CD4-positive, alpha-beta memory T cell (primary cell): ENCODE measurements at regions of chr5 and their contacts with region 1.

Region 1: GRCh38 chr5:50962934-50963872 is 296.8 kb downstream of the PARP8 start:
- DNase-seq: peak; percentile 41 to 56 (median 47)
- H3K4me3 ChIP-seq: peak overlapping the region; percentile 14 to 17
- H3K4me3 Mint-ChIP-seq: peak overlapping the region; percentile 78 to 96 (median 86)
- H3K27ac ChIP-seq: no peak overlapping the region
- H3K27ac Mint-ChIP-seq: no peak overlapping the region
- H3K4me1 ChIP-seq: peaks cover 49% of the 10 kb centered on the region
- H3K4me1 Mint-ChIP-seq: peaks cover 27 to 47% (median 39%) of the 10 kb centered on the region in 4 donors
- H3K27me3 ChIP-seq: peaks cover 48% of the 10 kb centered on the region
- H3K27me3 Mint-ChIP-seq: peaks cover 48 to 50% of the 10 kb centered on the region in 2 donors

Region 2: DNA sequence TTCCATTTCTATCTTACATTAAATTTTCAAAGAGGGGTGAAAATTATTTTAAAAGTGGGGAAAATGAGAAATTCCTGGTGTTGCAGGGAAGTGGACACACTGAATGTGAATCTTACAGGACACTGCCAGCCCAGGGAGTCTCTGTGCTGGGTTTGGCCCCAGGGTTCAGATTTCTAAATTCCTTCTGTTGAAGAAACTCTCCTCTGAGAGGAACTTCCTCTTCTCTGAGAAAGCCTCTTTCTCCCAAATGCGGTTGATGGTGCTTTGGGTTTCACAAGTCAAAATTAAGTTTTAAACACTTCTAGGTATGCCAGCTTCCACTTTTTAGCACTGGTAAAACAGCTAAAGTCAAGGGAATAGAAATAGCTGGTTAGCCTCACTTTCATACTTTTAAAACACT is 1506.6 kb after region 1 on chr5:
- CTCF ChIA-PET with region 1: no interaction called
- POLR2A ChIA-PET with region 1: no interaction called
- intact Hi-C with region 1: loop called (anchors 10 kb)
- DNase-seq: peak in 1 of 5 donors; percentile 0
- H3K4me3 ChIP-seq: peak overlapping the region in 1 of 2 donors; percentile 30
- H3K4me3 Mint-ChIP-seq: peak overlapping the region; percentile 71 to 87 (median 79)
- H3K27ac ChIP-seq: no peak overlapping the region
- H3K27ac Mint-ChIP-seq: peak overlapping the region; percentile 74 to 94 (median 89)
- H3K4me1 ChIP-seq: peaks cover 14% of the 10 kb centered on the region
- H3K4me1 Mint-ChIP-seq: peaks cover 5 to 17% (median 10%) of the 10 kb centered on the region in 4 donors
- H3K27me3 ChIP-seq: no peaks in the 10 kb centered on the region
- H3K27me3 Mint-ChIP-seq: no peaks in the 10 kb centered on the region

Region 3: DNA sequence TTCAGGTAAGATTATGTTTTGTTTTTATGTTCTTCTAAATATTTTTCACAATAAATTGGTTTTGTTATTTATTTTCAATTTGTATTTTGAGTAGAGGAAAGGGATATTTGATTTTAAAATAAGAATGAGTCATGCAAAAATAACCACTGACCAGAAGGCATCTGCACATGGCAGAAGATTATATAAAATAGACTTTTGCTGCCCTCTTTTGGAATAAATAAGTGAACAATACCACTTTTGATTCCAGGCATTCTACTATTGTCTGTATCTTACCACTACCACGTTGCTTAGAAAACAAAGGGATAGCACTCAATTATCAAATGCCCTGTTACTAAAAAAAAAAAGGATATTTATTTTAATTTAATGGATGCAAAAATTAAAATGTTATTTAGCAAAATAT is 1597.2 kb after region 1 on chr5:
- CTCF ChIA-PET with region 1: no interaction called
- POLR2A ChIA-PET with region 1: no interaction called
- intact Hi-C with region 1: loop called (anchors 5 kb)
- DNase-seq: peak in 2 of 5 donors; percentile 2 to 10
- H3K4me3 ChIP-seq: no peak overlapping the region
- H3K4me3 Mint-ChIP-seq: no peak overlapping the region
- H3K27ac ChIP-seq: no peak overlapping the region
- H3K27ac Mint-ChIP-seq: no peak overlapping the region
- H3K4me1 ChIP-seq: no peaks in the 10 kb centered on the region
- H3K4me1 Mint-ChIP-seq: no peaks in the 10 kb centered on the region
- H3K27me3 ChIP-seq: no peaks in the 10 kb centered on the region
- H3K27me3 Mint-ChIP-seq: peaks cover 0 to 2% of the 10 kb centered on the region in 2 donors

Region 4: DNA sequence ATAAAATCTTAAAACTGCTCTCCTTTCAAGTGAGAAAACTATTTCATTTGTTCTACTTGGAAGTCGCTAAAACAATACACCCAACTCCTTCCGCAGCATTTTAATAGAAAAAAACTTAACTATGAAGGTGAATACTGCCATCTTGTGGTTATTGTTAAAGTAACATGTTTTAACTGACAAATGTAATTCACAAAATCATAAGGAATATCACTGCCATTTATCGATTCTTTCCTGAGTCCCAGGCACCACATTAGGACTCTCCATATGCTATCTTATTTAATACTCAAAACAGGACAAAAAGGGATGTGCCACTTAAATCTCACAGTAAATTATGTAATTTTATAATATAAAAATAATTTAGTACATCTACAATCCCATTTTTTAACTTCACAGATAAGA is 1694.0 kb after region 1 on chr5:
- CTCF ChIA-PET with region 1: interaction called, 37 read pairs
- POLR2A ChIA-PET with region 1: no interaction called
- intact Hi-C with region 1: loop called (anchors 1 kb)
- DNase-seq: peak in 4 of 5 donors; percentile 45 to 53 (median 51)
- H3K4me3 ChIP-seq: no peak overlapping the region
- H3K4me3 Mint-ChIP-seq: no peak overlapping the region
- H3K27ac ChIP-seq: no peak overlapping the region
- H3K27ac Mint-ChIP-seq: no peak overlapping the region
- H3K4me1 ChIP-seq: peaks cover 4% of the 10 kb centered on the region
- H3K4me1 Mint-ChIP-seq: no peaks in the 10 kb centered on the region
- H3K27me3 ChIP-seq: no peaks in the 10 kb centered on the region
- H3K27me3 Mint-ChIP-seq: peaks cover 3 to 12% of the 10 kb centered on the region in 2 donors

Region 5: DNA sequence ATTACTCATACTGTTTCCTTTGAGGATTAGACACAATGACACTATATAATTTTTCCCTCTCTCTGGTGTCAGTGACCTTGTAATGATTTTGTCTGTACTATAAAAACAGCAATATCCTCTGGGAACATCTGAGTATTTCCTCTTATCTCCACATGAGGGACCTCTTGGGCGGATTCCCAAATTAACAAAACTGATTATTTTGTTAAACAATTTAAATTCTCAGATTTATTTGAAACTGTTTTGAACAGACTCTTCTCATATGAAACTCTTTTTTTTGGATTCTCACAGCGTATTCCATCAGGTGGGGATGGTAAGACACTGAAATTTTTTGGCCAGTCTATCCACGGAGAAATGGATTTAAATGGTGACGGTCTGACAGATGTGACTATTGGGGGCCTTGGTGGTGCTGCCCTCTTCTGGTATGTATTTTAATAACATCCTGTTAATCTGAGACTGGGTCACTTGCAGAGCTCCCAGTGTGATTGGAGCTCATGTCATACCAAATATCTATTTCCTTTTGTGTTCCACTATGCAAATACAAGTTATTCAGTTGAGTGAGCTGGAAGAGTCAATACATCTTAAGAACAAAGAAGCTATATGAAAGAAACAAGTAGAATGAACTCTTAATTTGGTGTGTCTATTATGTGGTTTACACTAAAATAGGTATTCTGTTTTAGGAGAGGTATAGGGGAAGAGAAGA is 1952.1 kb after region 1 on chr5:
- CTCF ChIA-PET with region 1: no interaction called
- POLR2A ChIA-PET with region 1: no interaction called
- intact Hi-C with region 1: loop called (anchors 10 kb)
- DNase-seq: peak; percentile 41 to 72 (median 67)
- H3K4me3 ChIP-seq: no peak overlapping the region
- H3K4me3 Mint-ChIP-seq: peak overlapping the region in 7 of 8 donors; percentile 58 to 77 (median 74)
- H3K27ac ChIP-seq: no peak overlapping the region
- H3K27ac Mint-ChIP-seq: peak overlapping the region in 1 of 7 donors; percentile 39
- H3K4me1 ChIP-seq: peaks cover 5% of the 10 kb centered on the region
- H3K4me1 Mint-ChIP-seq: peaks cover 0 to 9% (median 2%) of the 10 kb centered on the region in 4 donors
- H3K27me3 ChIP-seq: no peaks in the 10 kb centered on the region
- H3K27me3 Mint-ChIP-seq: no peaks in the 10 kb centered on the region